BJ (cell line): ENCODE measurements at regions of chr20 and their contacts with region 1.

Region 1: DNA sequence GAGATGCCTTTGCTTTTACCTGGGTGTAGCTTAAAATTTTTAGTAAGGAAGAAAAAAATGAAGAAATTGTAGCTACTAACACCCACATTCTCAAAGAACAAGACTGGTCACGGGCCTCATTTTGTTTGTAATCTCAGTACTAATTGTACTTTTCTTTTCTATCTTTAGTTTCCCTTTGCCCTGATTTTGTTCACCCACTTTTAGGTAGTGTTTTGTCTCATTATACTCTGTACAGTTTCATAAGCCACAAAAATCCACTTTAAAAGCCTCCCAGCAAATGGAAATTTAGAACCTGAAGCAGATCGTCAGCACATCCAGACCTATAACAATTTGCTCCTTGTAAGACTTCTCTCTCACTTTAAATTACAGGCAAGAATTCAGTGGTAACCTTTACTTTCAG is 43.3 kb downstream of the TP53INP2 start:
- DNase-seq: no peak
- H3K4me3 ChIP-seq: no peak overlapping the region
- H3K27me3 ChIP-seq: no peaks in the 10 kb centered on the region
- CTCF ChIP-seq: no peak

Region 2: DNA sequence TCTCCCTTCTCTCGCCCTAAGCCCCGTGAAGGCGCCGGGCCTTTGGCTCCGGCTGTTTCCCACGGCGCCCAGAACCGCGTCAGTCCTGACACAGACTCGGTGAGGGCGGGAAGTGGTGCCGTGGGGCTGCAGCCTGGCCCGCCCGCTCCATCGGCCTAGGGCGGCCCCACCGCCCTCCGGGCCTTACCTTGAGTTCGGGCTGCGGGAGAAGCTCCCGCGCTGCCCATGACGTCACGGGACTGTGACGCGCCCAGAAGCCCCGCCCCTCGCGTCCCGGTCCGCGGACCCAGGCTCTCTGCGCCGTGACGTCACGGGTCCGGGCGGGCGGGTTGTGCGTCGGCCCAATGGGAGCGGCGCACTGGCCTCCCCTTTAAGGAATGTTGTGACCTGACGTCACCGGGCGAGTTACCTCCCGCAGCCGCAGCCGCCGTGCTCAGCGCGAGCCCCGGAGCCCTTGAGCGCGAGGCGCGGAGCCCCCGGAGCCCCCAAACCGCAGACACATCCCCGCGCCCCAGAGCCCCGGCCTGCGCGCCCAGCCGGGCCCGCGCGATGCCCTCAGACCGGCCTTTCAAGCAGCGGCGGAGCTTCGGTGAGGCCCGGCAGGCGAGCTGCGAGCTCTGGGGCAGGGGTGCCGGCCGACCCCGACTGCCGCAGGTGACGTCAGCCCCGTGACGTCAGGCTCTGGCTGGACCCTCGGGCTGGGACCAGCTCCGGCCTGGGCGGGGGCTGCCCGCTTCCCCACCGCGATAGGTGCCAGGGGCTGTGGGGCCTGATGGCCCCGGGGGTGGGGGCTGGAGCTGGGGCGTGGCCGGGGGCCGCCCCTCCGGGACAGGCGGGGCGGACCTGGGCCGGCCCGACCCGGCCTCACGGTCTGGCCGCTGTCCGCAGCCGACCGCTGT is 188.9 kb before region 1 on chr20 and contains the start of gene MAP1LC3A:
- CTCF ChIA-PET with region 1: no interaction called
- POLR2A ChIA-PET with region 1: no interaction called
- DNase-seq: peak; percentile 57
- H3K4me3 ChIP-seq: peak within 1 kb of the TSS; percentile 88
- H3K27me3 ChIP-seq: no peaks in the 10 kb centered on the region
- CTCF ChIP-seq: no peak
- polyA plus RNA-seq, gene MAP1LC3A: 28.7 and 33.7 TPM in 2 replicates

Region 3: GRCh38 chr20:34768096-34768495 is 20.6 kb after region 1 on chr20:
- CTCF ChIA-PET with region 1: interaction called, 10 read pairs
- POLR2A ChIA-PET with region 1: no interaction called
- DNase-seq: peak; percentile 62
- H3K4me3 ChIP-seq: no peak overlapping the region
- H3K27me3 ChIP-seq: no peaks in the 10 kb centered on the region
- CTCF ChIP-seq: no peak